Mammary epithelial cell (primary cell): ENCODE measurements at regions of chr5 and their contacts with region 1.

Region 1: DNA sequence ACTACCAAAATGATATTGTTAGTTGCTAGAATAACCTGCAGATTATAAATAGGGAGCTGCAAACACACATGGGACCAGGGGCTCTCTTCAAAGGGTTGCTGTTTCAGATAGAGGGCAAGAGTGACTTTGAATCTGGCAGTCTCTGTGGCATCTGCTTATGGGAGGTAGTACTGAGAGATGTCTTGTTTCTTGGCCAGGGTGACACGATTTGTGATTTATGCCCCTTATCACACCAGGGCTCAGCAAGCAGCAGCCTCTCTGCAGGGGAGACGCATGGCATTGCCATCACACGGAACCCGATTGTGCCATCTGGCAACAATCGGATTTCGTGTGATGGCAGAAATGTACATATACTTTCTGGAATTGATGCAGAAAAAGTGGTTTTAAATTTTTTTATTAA is 615.6 kb downstream of the ZNF608 start:
- DNase-seq: no peak
- H3K4me3 ChIP-seq: no peak overlapping the region
- H3K27ac ChIP-seq: no peak overlapping the region
- H3K4me1 ChIP-seq: peaks cover 10% of the 10 kb centered on the region
- H3K27me3 ChIP-seq: no peaks in the 10 kb centered on the region
- CTCF ChIP-seq: no peak

Region 2: GRCh38 chr5:124580925-124581821 is 450.4 kb after region 1 on chr5:
- CTCF ChIA-PET with region 1: interaction called, 27 read pairs
- dilution Hi-C with region 1: no loop called
- in situ Hi-C with region 1: no loop called
- intact Hi-C with region 1: no loop called
- DNase-seq: peak; percentile 33
- H3K4me3 ChIP-seq: no peak overlapping the region
- H3K27ac ChIP-seq: no peak overlapping the region
- H3K4me1 ChIP-seq: peaks cover 12% of the 10 kb centered on the region
- H3K27me3 ChIP-seq: no peaks in the 10 kb centered on the region
- CTCF ChIP-seq: no peak